T-cell (primary cell): ENCODE measurements at regions of chr20 and their contacts with region 1.

Region 1: DNA sequence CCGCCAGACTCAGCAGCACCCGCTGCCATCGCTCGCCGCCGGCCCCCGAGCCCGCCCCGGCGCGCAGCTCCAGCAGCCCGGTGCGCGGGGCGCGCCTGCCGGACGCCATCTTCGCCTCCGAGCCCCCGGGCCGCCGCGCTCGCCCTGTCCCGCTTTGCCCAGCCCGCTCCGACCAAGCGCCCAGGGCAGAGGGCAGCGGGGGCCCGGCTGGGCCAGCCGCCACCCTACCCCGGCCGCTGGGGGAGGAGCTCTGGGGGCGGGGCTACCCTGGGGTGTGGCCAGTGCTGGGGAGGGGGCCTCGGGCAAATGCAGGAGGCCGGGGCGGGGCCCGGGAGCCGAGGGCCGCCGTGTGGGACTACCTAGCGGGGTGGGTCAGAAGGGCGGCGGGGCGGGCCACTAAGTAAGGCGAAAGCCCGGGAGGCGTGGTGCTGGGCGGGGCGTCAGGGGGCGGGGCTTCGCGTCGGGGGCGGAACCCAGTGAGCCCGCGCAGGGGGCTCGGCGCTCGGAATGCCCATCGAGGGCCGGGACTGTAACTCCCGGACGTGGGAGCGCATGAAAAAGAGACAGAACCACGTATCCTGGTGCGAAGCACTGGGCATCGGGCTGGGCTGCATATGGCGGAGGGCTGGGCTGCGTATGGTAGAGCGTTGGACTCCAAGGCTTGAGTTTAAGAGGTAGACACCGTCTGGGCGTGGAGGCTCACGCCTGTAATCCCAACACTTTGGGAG is at the start of gene SNTA1:
- DNase-seq: peak; percentile 44 to 88 (median 67)
- ATAC-seq: peak; percentile 72 to 85 (median 82)
- H3K4me3 ChIP-seq: peak within 1 kb of the TSS; percentile 90 to 91
- H3K4me3 Mint-ChIP-seq: peak within 1 kb of the TSS; percentile 89 to 90 (median 89)
- H3K27ac ChIP-seq: peak within 1 kb of the TSS; percentile 74
- H3K27ac Mint-ChIP-seq: peak within 1 kb of the TSS; percentile 86 to 90
- H3K4me1 ChIP-seq: peaks cover 3 to 23% of the 10 kb centered on the region in 2 experiments
- H3K4me1 Mint-ChIP-seq: peaks cover 21 to 27% (median 27%) of the 10 kb centered on the region in 3 donors
- H3K27me3 ChIP-seq: no peaks in the 10 kb centered on the region
- H3K27me3 Mint-ChIP-seq: no peaks in the 10 kb centered on the region
- total RNA-seq, gene SNTA1: 4.4 to 7.8 (median 5.5) TPM

Region 2: GRCh38 chr20:33459599-33459998 is 15.9 kb after region 1 on chr20:
- CTCF ChIA-PET with region 1: interaction called, 4 to 10 read pairs
- POLR2A ChIA-PET with region 1: no interaction called
- DNase-seq: no peak
- ATAC-seq: no peak
- H3K4me3 ChIP-seq: no peak overlapping the region
- H3K4me3 Mint-ChIP-seq: no peak overlapping the region
- H3K27ac ChIP-seq: no peak overlapping the region
- H3K27ac Mint-ChIP-seq: no peak overlapping the region
- H3K4me1 ChIP-seq: peaks cover 0 to 4% of the 10 kb centered on the region in 2 experiments
- H3K4me1 Mint-ChIP-seq: peaks cover 0 to 3% (median 0%) of the 10 kb centered on the region in 3 donors
- H3K27me3 ChIP-seq: no peaks in the 10 kb centered on the region
- H3K27me3 Mint-ChIP-seq: no peaks in the 10 kb centered on the region

Region 3: GRCh38 chr20:33666293-33667244 is 222.9 kb after region 1 on chr20 and contains the start of gene ACTL10:
- CTCF ChIA-PET with region 1: interaction called, 3 to 11 read pairs
- POLR2A ChIA-PET with region 1: no interaction called
- DNase-seq: peak; percentile 39 to 86 (median 64)
- ATAC-seq: peak; percentile 32 to 47 (median 37)
- H3K4me3 ChIP-seq: peak within 1 kb of the TSS; percentile 73 to 81
- H3K4me3 Mint-ChIP-seq: peak within 1 kb of the TSS; percentile 91 to 96 (median 95)
- H3K27ac ChIP-seq: peak within 1 kb of the TSS; percentile 62
- H3K27ac Mint-ChIP-seq: peak within 1 kb of the TSS; percentile 93 to 97
- H3K4me1 ChIP-seq: peaks cover 8 to 53% of the 10 kb centered on the region in 2 experiments
- H3K4me1 Mint-ChIP-seq: peaks cover 37 to 44% (median 38%) of the 10 kb centered on the region in 3 donors
- H3K27me3 ChIP-seq: no peaks in the 10 kb centered on the region
- H3K27me3 Mint-ChIP-seq: no peaks in the 10 kb centered on the region
- total RNA-seq, gene ACTL10: 1.1 to 7.9 (median 6.1) TPM